ENCODE measurements at regions of chr17 and their contacts with region 1.

Region 1: GRCh38 chr17:58390877-58391276 is 26.5 kb downstream of the RNF43 start:
- DNase-seq: no peak
- ATAC-seq: no peak

Region 2: DNA sequence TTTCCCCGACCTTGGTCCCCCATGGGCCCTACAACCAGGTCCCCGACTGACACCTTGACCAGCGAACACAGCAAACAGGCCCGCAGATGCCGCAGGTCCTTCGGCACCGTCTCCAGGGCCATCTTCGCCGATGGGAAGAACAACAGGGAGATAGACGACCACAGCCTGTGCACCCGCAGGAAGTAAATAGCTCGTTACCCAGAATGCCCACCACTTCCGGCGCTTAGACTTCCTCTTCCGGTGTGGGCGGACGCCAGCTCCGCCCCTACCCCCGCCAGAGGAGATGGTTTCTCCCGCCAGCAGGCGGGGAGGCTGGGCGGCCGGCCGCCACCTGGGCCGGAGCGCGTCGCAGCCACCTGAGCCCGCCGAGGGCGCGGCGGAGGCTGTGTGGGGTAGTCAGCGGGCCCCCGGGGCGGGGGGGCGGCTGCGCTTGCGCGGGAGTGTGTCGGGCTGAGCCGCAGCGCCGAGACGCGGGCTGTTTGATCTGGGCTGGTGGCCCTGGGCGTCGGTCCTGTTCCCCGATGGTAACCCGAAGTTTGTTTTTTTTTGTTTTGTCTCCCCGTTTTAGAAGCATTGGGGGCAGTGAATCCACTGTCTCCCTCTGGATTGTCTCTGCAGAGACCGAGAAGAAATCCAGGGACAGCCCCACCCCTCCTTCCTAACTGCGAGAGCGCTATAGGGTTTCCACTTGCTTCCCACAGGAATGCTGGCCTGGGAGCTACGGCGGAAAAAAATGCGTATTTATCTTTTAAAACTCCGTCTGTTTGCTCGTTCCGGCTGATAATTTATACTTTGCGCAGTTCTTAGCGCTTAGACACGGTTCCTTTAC is 38.6 kb before region 1 on chr17 and contains the start of gene SUPT4H1:
- intact Hi-C with region 1: loop called (anchors 1 kb)
- DNase-seq: peak; percentile 93
- ATAC-seq: peak; percentile 99
- total RNA-seq, gene SUPT4H1: 62.2 TPM